Dorsolateral prefrontal cortex (tissue), 120 donors: ENCODE measurements at regions of chr14 and their contacts with region 1.

Region 1: GRCh38 chr14:105314287-105315200 is at the start of gene PACS2:
- DNase-seq: peak in 5 of 10 donors; percentile 47 to 85 (median 63)
- H3K4me3 ChIP-seq: peak within 1 kb of the TSS; percentile 55 to 94 (median 84)
- H3K27ac ChIP-seq: peak within 1 kb of the TSS; percentile 84 to 99 (median 98)
- H3K27me3 ChIP-seq: no peaks in the 10 kb centered on the region
- CTCF ChIP-seq: no peak
- total RNA-seq, gene PACS2: 131 to 394 (median 200) TPM

Region 2: DNA sequence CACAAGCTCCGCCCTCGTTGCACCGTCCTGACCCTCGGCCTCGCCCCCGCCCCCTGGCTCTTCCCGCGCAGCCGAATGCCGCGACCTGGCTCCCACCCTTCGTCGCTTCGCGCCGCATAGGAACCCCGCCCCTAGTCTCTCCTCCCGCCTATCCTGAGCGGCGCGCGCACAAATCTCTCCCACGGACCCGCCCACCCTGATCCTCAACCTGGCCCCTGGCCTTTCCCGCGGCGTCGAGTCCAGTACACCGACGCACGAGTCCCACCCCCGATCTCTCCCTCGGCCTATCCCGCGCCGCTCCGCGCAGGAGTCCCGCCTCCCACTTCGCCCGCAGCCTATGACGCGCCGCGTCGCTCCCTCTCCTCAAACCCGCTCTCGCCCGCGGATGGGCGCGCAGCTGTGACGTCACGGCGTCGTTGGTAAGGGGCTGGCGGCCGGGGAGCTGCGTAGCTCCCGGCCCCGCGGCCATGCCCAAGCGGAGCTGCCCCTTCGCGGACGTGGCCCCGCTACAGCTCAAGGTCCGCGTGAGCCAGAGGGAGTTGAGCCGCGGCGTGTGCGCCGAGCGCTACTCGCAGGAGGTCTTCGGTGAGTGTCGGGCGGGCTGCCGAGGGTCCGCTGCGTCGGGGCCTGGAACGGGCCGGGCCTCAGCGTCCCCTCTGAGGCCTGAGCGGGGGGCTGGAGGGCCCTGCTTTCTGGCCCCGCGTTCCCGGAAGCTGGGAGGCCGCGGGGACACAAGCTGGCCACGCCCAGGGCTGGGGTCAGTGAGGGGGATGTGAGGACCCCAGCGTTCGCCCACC is 561.6 kb before region 1 on chr14 and contains the start of gene SIVA1:
- intact Hi-C with region 1: no loop called
- DNase-seq: peak; percentile 98 to 100 (median 99)
- H3K4me3 ChIP-seq: peak within 1 kb of the TSS; percentile 77 to 100 (median 98)
- H3K27ac ChIP-seq: peak within 1 kb of the TSS in 53 of 59 donors; percentile 29 to 90 (median 71)
- H3K27me3 ChIP-seq: no peaks in the 10 kb centered on the region
- CTCF ChIP-seq: peak in 12 of 56 donors; percentile 11 to 50 (median 19)
- total RNA-seq, gene SIVA1: 23.3 to 52.5 (median 36.1) TPM

Region 3: DNA sequence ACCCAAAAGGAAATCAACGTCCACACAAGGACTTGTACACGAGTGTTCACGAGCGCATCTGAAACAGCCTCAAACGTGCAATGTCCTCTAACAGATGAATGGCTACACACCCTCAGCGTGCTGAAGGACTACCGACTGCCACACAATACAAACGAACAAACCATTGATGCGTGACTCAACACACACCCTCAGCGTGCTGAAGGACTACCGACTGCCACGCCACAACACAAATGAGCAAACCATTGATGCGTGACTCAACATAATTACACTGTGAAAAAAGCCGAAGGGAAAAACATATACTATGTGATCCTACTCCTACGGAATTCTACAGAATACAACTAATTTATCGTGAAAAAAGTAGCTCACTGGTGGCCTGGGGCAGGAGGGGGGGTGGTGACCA is 91.3 kb before region 1 on chr14:
- intact Hi-C with region 1: no loop called
- DNase-seq: no peak
- H3K4me3 ChIP-seq: no peak overlapping the region
- H3K27ac ChIP-seq: no peak overlapping the region
- H3K27me3 ChIP-seq: no peaks in the 10 kb centered on the region
- CTCF ChIP-seq: no peak

Region 4: GRCh38 chr14:105248368-105248756 is 66.2 kb before region 1 on chr14 and contains the start of gene BTBD6:
- intact Hi-C with region 1: loop called in 1 of 2 experiments (anchors 10 kb)
- DNase-seq: peak; percentile 75 to 94 (median 86)
- H3K4me3 ChIP-seq: peak within 1 kb of the TSS; percentile 45 to 85 (median 68)
- H3K27ac ChIP-seq: peak within 1 kb of the TSS in 58 of 59 donors; percentile 63 to 96 (median 88)
- H3K27me3 ChIP-seq: no peaks in the 10 kb centered on the region
- CTCF ChIP-seq: peak in 4 of 56 donors; percentile 13 to 28 (median 18)
- total RNA-seq, gene BTBD6: 28.3 to 99.3 (median 59.6) TPM

Region 5: GRCh38 chr14:105275267-105275946 is 39.1 kb before region 1 on chr14:
- intact Hi-C with region 1: no loop called
- DNase-seq: no peak
- H3K4me3 ChIP-seq: no peak overlapping the region
- H3K27ac ChIP-seq: peak overlapping the region in 31 of 59 donors; percentile 2 to 65 (median 31)
- H3K27me3 ChIP-seq: no peaks in the 10 kb centered on the region
- CTCF ChIP-seq: no peak

Region 6: DNA sequence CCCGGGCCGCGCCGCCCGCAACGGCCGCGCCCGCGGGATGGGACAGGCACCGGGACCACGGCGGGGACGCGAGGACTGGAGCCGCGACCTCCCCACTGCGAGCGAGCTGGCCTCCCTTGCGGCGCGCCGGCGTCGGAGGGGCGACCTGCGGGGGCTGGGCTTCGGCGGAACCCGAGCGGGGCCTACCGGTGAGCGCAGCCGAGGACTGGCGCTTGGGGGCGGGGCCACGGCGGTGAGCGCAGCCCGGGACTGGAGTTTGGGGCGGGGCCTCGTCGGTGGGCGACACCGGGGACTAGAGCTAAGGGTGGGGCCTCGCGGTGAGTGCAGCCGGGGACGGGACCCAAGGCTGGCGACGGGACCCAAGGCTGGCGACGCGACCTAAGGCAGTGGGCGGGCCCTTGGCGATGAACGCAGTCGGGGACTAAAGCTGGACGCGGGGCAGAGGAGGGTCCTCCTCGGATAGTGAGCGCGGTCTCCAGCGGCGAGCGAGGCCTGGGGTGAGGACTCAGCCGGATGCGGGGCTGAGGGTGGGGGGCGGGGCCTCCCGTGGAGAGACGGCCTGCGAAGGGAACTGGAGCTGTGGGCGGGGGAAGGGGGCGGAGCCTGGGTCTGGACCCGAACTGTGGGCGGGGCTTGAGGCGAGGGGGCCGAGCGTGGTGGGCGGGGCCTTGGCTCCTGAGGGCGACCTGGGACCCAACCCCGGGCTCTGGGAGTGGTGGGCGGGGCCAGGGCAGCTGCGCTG is 13.6 kb before region 1 on chr14 and contains the start of gene BRF1:
- intact Hi-C with region 1: loop called (anchors 1 kb)
- DNase-seq: peak; percentile 95 to 99 (median 96)
- H3K4me3 ChIP-seq: peak within 1 kb of the TSS; percentile 61 to 93 (median 86)
- H3K27ac ChIP-seq: peak within 1 kb of the TSS; percentile 70 to 98 (median 94)
- H3K27me3 ChIP-seq: no peaks in the 10 kb centered on the region
- CTCF ChIP-seq: peak in 2 of 56 donors; percentile 2 to 5
- total RNA-seq, gene BRF1: 55.3 to 109 (median 75.5) TPM

Region 7: GRCh38 chr14:105351920-105352851 is 37.6 kb after region 1 on chr14:
- intact Hi-C with region 1: loop called in 1 of 2 experiments (anchors 5 kb)
- DNase-seq: peak; percentile 75 to 90 (median 85)
- H3K4me3 ChIP-seq: peak overlapping the region in 1 of 59 donors; percentile 6
- H3K27ac ChIP-seq: peak overlapping the region in 47 of 59 donors; percentile 3 to 80 (median 53)
- H3K27me3 ChIP-seq: no peaks in the 10 kb centered on the region
- CTCF ChIP-seq: peak; percentile 51 to 94 (median 87)